ENCODE measurements at regions of chr22 and their contacts with region 1.

Region 1: GRCh38 chr22:24543679-24544243 is 11.2 kb downstream of the GUCD1 start:
- DNase-seq: no peak

Region 2: DNA sequence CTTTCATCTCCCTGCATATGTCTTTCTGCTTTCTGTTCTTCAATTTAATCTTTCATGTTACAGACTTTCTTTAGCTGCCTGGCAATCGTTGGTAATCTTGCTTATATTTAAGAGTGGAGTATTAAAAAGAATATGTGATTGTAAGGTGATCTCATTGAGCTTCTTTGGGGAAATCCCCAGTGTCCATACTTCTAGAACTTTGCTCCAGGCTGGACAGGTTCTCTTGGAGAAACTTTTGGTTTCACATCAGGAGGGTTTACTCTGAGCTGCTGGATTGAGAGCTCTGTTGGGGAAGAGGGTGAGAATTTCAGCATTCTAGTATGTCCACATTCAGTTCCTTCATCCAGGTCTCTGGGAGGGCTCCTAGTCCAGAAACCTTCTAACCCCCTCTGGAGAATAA is 33.0 kb after region 1 on chr22:
- intact Hi-C with region 1: loop called in 1 of 2 experiments (anchors 1 kb)
- DNase-seq: no peak

Measured in posterior vena cava (tissue), 2 donors.